ENCODE measurements at regions of chr17 and their contacts with region 1.

Region 1: GRCh38 chr17:76408052-76408849 is 23.8 kb downstream of the SPHK1 start:
- DNase-seq: peak; percentile 79
- CTCF ChIP-seq: peak; percentile 89

Region 2: DNA sequence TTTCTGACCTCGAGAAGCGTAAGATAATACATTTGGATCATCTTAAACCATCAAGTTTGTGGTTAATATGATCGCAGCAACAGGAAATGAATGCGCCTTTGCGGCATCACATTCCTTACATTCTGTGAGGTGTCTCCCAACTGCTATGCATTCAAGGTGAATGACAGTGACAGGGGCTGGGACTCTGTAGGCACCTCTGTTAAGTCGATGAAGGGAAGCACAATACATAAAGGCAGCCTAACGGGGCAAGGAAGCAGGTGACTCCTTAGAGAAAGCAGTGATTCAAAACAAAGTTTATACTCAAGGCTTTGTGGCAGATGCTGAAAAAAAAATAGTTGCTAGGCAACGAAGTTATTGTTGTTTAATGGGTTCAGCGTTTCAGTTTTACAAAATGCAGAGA is 359.5 kb before region 1 on chr17:
- CTCF ChIA-PET with region 1: no interaction called
- POLR2A ChIA-PET with region 1: no interaction called
- DNase-seq: no peak
- CTCF ChIP-seq: no peak

Region 3: GRCh38 chr17:76427501-76428231 is 19.4 kb after region 1 on chr17:
- CTCF ChIA-PET with region 1: interaction called, 13 read pairs
- POLR2A ChIA-PET with region 1: no interaction called
- DNase-seq: no peak
- CTCF ChIP-seq: no peak

Region 4: DNA sequence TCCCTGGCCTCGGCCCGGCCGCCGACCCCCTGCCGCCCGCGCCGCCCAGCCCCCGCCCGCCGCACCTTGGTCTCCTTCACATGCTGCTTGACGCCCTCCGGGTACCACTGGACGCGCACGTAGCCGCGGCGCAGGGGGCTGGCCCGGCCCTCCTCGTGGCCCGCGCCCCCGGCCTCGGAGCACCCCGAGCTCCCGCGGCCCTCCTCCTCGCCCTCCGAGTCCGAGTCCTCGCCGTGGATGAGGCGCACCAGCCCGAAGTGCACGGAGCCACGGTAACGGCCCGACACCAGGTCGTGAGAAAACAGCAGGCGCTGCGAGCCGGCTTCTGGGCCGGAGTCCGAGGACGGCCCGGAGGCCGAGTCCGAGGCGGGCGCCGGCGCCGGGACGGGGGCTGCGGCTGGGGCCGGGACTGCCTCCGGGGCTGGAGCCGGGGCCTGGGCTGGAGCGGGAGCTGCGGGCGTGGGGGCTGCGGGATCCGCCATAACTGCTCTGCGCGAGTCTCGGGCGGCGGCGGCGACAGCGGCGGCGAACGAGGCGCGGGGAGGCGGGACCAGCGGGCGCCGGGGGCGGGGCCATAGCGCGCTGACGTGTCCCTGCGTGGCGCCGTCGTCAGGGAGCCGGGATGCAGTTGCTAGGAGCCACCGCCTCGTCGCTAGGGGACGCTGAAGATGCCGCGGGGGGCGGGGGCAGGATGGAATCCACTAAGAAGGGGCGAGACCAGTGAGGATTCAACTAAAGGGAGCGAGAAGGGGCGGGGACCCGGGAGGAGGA is 44.6 kb after region 1 on chr17 and contains the start of gene UBE2O:
- CTCF ChIA-PET with region 1: interaction called, 49 read pairs
- POLR2A ChIA-PET with region 1: no interaction called
- DNase-seq: peak; percentile 99
- CTCF ChIP-seq: peak; percentile 63

Region 5: DNA sequence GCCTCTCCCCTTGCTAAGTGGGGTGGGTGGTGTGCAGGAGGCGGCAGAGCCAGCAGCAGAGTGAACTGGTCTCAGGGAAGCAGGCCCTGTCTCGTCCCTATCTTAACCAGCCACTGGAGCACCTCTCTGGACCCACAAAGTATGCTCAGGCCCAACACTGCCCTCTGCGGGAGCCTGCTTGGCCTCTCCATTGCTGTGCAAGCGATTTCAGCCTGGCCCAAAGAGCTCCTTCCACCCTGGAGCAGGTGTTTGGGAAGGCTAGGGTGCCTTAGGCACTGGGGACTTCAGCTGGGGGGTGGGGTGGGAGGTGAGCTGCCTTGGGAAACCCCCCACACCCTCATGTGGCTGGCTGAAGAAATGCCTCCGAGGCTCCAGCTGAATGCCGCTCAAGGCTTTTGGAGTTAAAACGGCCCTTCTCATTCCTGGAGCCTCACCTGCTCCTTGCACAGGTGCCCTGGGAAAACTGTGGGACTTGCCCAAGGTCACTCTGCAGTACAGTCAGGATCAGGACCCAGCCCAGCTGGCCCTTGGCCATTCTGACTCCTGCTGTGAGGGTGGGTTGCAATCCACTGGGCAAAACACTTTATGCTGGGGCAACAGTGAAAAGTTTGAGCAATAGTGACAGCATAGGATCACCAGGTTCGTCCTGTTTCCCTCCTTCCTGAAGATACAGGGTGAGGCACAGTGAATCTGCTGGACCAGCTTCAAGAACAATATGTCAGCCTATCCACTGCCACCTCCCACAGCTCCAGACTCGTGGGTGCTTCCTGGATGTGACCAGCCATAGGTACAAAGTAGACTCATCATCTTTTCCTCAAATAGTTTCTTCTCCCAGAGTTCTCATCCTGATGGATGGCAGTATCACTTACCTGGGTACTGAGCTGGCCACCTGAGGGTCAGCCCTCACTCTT is 50.6 kb after region 1 on chr17:
- CTCF ChIA-PET with region 1: interaction called, 49 read pairs
- POLR2A ChIA-PET with region 1: no interaction called
- DNase-seq: peak; percentile 77
- CTCF ChIP-seq: peak; percentile 57

Region 6: GRCh38 chr17:76557368-76558197 is 149.3 kb after region 1 on chr17:
- CTCF ChIA-PET with region 1: no interaction called
- POLR2A ChIA-PET with region 1: no interaction called
- DNase-seq: peak; percentile 92
- CTCF ChIP-seq: peak; percentile 20